ENCODE measurements at regions of chr17 and their contacts with region 1.

Region 1: GRCh38 chr17:41811549-41812380 is at the start of gene P3H4:
- DNase-seq: peak in 1 of 2 experiments; percentile 93
- H3K4me3 ChIP-seq: peak within 1 kb of the TSS; percentile 70 to 94 (median 81)
- H3K27ac ChIP-seq: peak within 1 kb of the TSS; percentile 65; the same call in 1 of the 2 replicates
- H3K4me1 ChIP-seq: peaks cover 0 to 23% (median 7%) of the 10 kb centered on the region in 4 experiments; a peak in 6 of 7 replicates
- H3K27me3 ChIP-seq: peaks cover 0 to 6% (median 3%) of the 10 kb centered on the region in 4 experiments; a peak in 4 of 7 replicates
- CTCF ChIP-seq: peak; percentile 60 to 83 (median 70)
- EP300 ChIP-seq: no peak
- POLR2A ChIP-seq: 0 out of 3 replicates have a peak, but pooled peaks of 1 of the 2 experiments have one; percentile 20
- RAD21 ChIP-seq: peak; percentile 47 to 59
- total RNA-seq, gene P3H4: 22.6 and 23.4 TPM in 2 replicates

Region 2: GRCh38 chr17:41688699-41689496 is 122.9 kb before region 1 on chr17 and contains the start of gene EIF1:
- CTCF ChIA-PET with region 1: interaction called, 3 read pairs
- POLR2A ChIA-PET with region 1: interaction called, 16 read pairs
- DNase-seq: peak; percentile 100
- H3K4me3 ChIP-seq: peak within 1 kb of the TSS; percentile 92 to 99 (median 94)
- H3K27ac ChIP-seq: peak within 1 kb of the TSS; percentile 97
- H3K4me1 ChIP-seq: peaks cover 0 to 3% (median 2%) of the 10 kb centered on the region in 4 experiments; a peak in 4 of 7 replicates
- H3K27me3 ChIP-seq: no peaks in the 10 kb centered on the region
- CTCF ChIP-seq: no peak
- EP300 ChIP-seq: peak in 1 of 2 experiments; percentile 48; a peak in 1 of 3 replicates
- POLR2A ChIP-seq: peak; percentile 99
- RAD21 ChIP-seq: no peak
- total RNA-seq, gene EIF1: 528 and 539 TPM in 2 replicates

Region 3: GRCh38 chr17:41750862-41751261 is 60.9 kb before region 1 on chr17:
- CTCF ChIA-PET with region 1: interaction called, 5 read pairs
- POLR2A ChIA-PET with region 1: interaction called, 12 read pairs
- DNase-seq: no peak
- H3K4me3 ChIP-seq: no peak overlapping the region
- H3K27ac ChIP-seq: no peak overlapping the region
- H3K4me1 ChIP-seq: no peaks in the 10 kb centered on the region
- H3K27me3 ChIP-seq: no peaks in the 10 kb centered on the region; a peak in 2 of 7 replicates
- CTCF ChIP-seq: no peak
- EP300 ChIP-seq: no peak
- POLR2A ChIP-seq: no peak
- RAD21 ChIP-seq: no peak

Region 4: DNA sequence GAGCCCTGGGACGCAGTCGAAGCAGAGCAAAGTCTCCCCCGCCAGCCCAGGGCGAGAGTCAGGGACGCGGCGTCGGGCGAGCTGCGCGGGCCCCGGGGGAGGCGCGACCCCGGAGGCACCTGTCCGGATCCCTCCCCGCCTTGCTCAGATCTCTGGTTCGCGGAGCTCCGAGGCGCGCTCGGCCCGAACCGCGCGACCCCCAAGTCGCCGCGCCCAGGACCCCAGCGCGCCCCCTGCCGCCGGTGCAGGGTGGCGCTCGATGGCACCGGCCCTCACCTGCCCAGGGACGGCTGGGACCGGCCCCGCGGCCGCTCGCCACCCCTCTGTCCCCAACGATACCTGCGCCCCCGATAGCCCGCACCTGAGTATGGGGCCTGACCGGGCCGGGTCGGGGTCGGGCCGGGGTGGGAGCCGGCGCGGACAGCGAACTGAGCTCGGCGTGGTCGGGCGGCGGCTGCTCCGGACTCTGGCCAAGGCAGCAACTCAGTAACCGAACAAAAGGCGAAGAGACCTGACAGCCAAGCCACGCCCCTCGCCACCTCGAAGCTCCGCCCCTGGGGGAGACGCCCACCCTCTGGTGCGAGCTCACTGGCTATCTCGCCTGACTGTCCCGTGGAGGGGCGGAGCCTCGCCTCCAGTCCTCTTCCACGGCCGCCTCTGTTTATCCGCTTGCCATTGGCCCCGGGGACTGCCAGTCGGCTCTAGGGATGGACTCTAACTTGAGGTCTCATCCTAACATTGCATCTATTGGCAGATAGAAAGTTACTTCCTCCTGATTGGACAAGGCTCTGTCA is 25.3 kb before region 1 on chr17 and contains the start of gene JUP:
- CTCF ChIA-PET with region 1: interaction called, 18 read pairs
- POLR2A ChIA-PET with region 1: interaction called, 39 read pairs
- DNase-seq: peak; percentile 100
- H3K4me3 ChIP-seq: peak within 1 kb of the TSS; percentile 64 to 80 (median 72)
- H3K27ac ChIP-seq: peak within 1 kb of the TSS; percentile 70
- H3K4me1 ChIP-seq: peaks cover 2 to 19% (median 14%) of the 10 kb centered on the region in 4 experiments
- H3K27me3 ChIP-seq: no peaks in the 10 kb centered on the region
- CTCF ChIP-seq: peak; percentile 71 to 78 (median 76)
- EP300 ChIP-seq: 0 out of 3 replicates have a peak, but pooled peaks of 1 of the 2 experiments have one; percentile 54
- POLR2A ChIP-seq: peak; percentile 70 to 84
- RAD21 ChIP-seq: peak; percentile 26 to 52; a peak in 3 of 4 replicates
- total RNA-seq, gene JUP: 98.6 and 102 TPM in 2 replicates

Region 5: GRCh38 chr17:41801374-41802271 is 10.1 kb before region 1 on chr17:
- CTCF ChIA-PET with region 1: interaction called, 46 read pairs
- POLR2A ChIA-PET with region 1: interaction called, 38 read pairs
- DNase-seq: peak in 1 of 2 experiments; percentile 97
- H3K4me3 ChIP-seq: peak overlapping the region in 2 of 4 experiments; percentile 21 to 34; a peak in 4 of 8 replicates
- H3K27ac ChIP-seq: 0 out of 2 replicates have a peak overlapping the region, but pooled peaks have one; percentile 1
- H3K4me1 ChIP-seq: peaks cover 5 to 15% (median 10%) of the 10 kb centered on the region in 4 experiments
- H3K27me3 ChIP-seq: no peaks in the 10 kb centered on the region
- CTCF ChIP-seq: peak; percentile 92 to 97 (median 97)
- EP300 ChIP-seq: no peak
- POLR2A ChIP-seq: peak in 1 of 2 experiments; percentile 17; a peak in 1 of 3 replicates
- RAD21 ChIP-seq: peak; percentile 88 to 91

Measured in H1 (cell line).